ENCODE measurements at regions of chr9 and their contacts with region 1.

Region 1: DNA sequence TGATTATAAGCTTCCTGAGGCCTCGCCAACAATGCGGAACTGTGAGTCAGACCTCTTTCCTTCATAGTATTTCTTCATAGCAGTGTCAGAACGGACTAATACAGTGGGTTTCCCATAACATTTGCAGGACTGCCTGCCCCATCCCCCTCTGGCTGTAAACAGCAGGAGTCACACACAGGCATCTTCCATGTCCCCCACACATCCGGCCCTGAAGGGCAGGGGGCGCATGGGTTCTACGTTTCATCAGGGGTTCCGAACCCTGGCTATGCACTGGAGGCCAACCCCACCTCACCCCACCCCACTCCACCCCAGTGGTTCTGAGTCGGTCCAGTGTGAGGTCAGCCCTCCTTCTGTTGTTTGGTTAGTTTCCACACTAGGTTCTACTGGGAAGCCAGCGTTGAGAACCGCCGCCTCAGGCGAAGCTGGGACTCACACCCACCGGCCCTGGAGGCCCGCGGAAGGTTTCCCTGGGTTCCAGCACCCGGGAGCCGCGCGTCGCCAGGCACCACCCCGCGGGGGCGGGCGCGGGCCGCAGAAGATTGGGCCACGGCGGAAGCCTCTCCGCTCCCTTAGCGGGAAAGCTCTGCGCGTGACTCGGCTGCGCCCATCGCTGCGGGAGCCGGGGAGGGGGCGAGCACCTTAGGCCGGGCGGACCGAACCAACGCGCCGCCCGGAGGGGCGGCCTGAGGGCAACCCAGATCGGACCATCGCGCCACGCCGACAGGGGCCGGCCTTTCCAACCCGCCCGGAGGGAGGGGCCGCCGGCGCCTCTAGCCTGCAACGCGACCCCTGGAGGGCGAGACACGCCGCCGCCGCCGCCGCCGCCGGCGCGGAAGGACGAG is at the start of gene RUSC2:
- DNase-seq: peak; percentile 82
- ATAC-seq: peak; percentile 72
- H3K4me3 Mint-ChIP-seq: peak within 1 kb of the TSS; percentile 76
- H3K27ac Mint-ChIP-seq: peak within 1 kb of the TSS; percentile 79
- H3K4me1 Mint-ChIP-seq: peaks cover 31% of the 10 kb centered on the region
- H3K27me3 Mint-ChIP-seq: peaks cover 9% of the 10 kb centered on the region
- total RNA-seq, gene RUSC2: 5.7 to 6.5 TPM

Region 2: DNA sequence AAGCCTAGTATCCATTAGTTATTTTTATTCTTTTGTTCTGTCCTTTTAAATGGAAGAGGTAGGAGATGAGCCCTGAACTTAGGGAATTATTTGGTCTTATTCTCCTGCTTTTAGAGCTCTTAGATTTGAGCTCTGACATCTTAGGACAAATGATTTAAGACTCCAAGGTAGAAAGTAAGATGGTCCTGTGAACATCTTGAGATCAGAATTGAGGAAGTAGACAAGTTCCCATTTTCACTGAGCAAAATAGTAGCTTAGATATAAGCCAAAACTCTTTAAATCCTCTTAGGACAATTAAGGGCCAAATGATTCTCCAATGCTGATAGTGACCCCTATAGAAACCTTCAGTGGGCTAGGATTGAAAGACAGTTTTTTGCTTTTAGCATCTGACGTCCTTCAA is 52.6 kb before region 1 on chr9:
- CTCF ChIA-PET with region 1: no interaction called
- POLR2A ChIA-PET with region 1: no interaction called
- intact Hi-C with region 1: loop called in 1 of 2 experiments (anchors 10 kb)
- DNase-seq: no peak
- ATAC-seq: no peak
- H3K4me3 Mint-ChIP-seq: no peak overlapping the region
- H3K27ac Mint-ChIP-seq: no peak overlapping the region
- H3K4me1 Mint-ChIP-seq: no peaks in the 10 kb centered on the region
- H3K27me3 Mint-ChIP-seq: peaks cover 2% of the 10 kb centered on the region

Region 3: GRCh38 chr9:35569206-35569605 is 79.7 kb after region 1 on chr9:
- CTCF ChIA-PET with region 1: no interaction called
- POLR2A ChIA-PET with region 1: no interaction called
- intact Hi-C with region 1: loop called (anchors 5 kb)
- DNase-seq: no peak
- ATAC-seq: no peak
- H3K4me3 Mint-ChIP-seq: peak overlapping the region; percentile 16
- H3K27ac Mint-ChIP-seq: peak overlapping the region; percentile 93
- H3K4me1 Mint-ChIP-seq: peaks cover 38% of the 10 kb centered on the region
- H3K27me3 Mint-ChIP-seq: no peaks in the 10 kb centered on the region